ENCODE measurements at regions of chr12 and their contacts with region 1.

Region 1: GRCh38 chr12:51341259-51342007 is 5.0 kb downstream of the CELA1 start:
- DNase-seq: peak; percentile 85
- ATAC-seq: peak; percentile 86
- H3K4me3 ChIP-seq: no peak overlapping the region
- H3K4me3 Mint-ChIP-seq: peak overlapping the region; percentile 42
- H3K27ac ChIP-seq: no peak overlapping the region
- H3K27ac Mint-ChIP-seq: peak overlapping the region; percentile 43
- H3K4me1 ChIP-seq: peaks cover 42 to 45% of the 10 kb centered on the region in 2 donors
- H3K4me1 Mint-ChIP-seq: peaks cover 43% of the 10 kb centered on the region
- H3K27me3 ChIP-seq: no peaks in the 10 kb centered on the region
- H3K27me3 Mint-ChIP-seq: no peaks in the 10 kb centered on the region
- CTCF ChIP-seq: peak; percentile 99

Region 2: GRCh38 chr12:50986966-50987737 is 354.3 kb before region 1 on chr12:
- CTCF ChIA-PET with region 1: interaction called, 13 read pairs
- POLR2A ChIA-PET with region 1: no interaction called
- intact Hi-C with region 1: loop called (anchors 5 kb)
- DNase-seq: peak; percentile 65
- ATAC-seq: peak; percentile 80
- H3K4me3 ChIP-seq: no peak overlapping the region
- H3K4me3 Mint-ChIP-seq: no peak overlapping the region
- H3K27ac ChIP-seq: no peak overlapping the region
- H3K27ac Mint-ChIP-seq: no peak overlapping the region
- H3K4me1 ChIP-seq: peaks cover 0 to 2% of the 10 kb centered on the region in 2 donors
- H3K4me1 Mint-ChIP-seq: peaks cover 6% of the 10 kb centered on the region
- H3K27me3 ChIP-seq: no peaks in the 10 kb centered on the region
- H3K27me3 Mint-ChIP-seq: no peaks in the 10 kb centered on the region
- CTCF ChIP-seq: peak; percentile 40

Region 3: GRCh38 chr12:51238510-51239334 is 102.7 kb before region 1 on chr12 and contains the start of gene DAZAP2:
- CTCF ChIA-PET with region 1: interaction called, 16 read pairs
- POLR2A ChIA-PET with region 1: interaction called, 4 read pairs
- intact Hi-C with region 1: no loop called
- DNase-seq: peak; percentile 98
- ATAC-seq: peak; percentile 92
- H3K4me3 ChIP-seq: peak within 1 kb of the TSS; percentile 69 to 100 (median 100)
- H3K4me3 Mint-ChIP-seq: peak within 1 kb of the TSS; percentile 93
- H3K27ac ChIP-seq: peak within 1 kb of the TSS; percentile 100
- H3K27ac Mint-ChIP-seq: peak within 1 kb of the TSS; percentile 100
- H3K4me1 ChIP-seq: peaks cover 24 to 34% of the 10 kb centered on the region in 2 donors
- H3K4me1 Mint-ChIP-seq: peaks cover 40% of the 10 kb centered on the region
- H3K27me3 ChIP-seq: no peaks in the 10 kb centered on the region
- H3K27me3 Mint-ChIP-seq: no peaks in the 10 kb centered on the region
- CTCF ChIP-seq: peak; percentile 31
- total RNA-seq, gene DAZAP2: 219 and 233 TPM in 2 replicates

Region 4: DNA sequence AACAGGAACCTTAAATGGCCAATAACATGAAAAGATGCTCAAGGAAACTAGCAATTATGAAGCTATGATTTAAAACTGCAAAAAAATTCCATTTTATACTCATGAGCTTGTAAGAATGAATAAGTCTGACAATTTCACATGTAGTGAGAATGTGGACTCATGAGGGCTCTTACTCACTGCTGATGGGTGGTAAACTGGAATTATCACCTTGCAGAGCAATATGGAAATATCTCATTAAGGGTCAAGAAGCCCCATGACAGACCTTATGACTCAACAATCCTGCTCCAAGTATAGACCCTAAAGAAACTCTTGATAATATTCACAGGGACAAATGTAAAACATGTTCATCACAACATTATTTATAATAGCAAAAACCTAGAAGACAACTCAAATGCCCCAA is 47.7 kb before region 1 on chr12:
- CTCF ChIA-PET with region 1: interaction called, 30 read pairs
- POLR2A ChIA-PET with region 1: no interaction called
- intact Hi-C with region 1: loop called (anchors 1 kb)
- DNase-seq: no peak
- ATAC-seq: no peak
- H3K4me3 ChIP-seq: no peak overlapping the region
- H3K4me3 Mint-ChIP-seq: no peak overlapping the region
- H3K27ac ChIP-seq: no peak overlapping the region
- H3K27ac Mint-ChIP-seq: no peak overlapping the region
- H3K4me1 ChIP-seq: peaks cover 0 to 8% of the 10 kb centered on the region in 2 donors
- H3K4me1 Mint-ChIP-seq: peaks cover 11% of the 10 kb centered on the region
- H3K27me3 ChIP-seq: no peaks in the 10 kb centered on the region
- H3K27me3 Mint-ChIP-seq: no peaks in the 10 kb centered on the region
- CTCF ChIP-seq: no peak

Region 5: DNA sequence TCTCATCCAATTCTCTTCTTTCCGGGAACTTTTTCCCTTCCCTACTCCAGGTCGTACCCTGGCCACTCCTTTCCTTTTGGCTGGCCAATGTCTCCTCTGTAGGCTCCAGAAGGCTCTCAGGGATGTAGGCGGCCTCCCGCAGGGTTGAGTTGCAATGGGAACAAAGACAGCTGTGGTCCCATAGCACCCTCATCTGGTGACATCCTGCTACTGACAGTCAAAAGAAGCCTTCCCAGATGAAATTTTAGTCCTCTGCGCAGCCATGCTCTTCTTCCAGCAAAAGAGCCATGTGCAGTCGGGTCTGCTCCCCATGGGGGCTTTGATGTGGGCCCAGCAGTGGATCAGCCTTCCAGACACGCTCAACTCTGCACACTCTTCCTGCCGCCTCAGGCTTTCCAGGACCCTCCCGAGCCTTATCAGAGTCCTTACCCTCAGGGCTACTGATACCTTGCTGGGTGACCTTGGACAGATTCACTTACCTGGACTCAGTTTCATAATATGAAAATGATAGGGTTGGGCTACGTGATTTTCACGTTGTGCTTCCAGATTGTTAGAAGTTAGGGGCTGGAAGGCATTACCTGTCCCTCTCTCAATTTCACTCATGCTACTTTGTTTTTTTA is 10.6 kb after region 1 on chr12:
- CTCF ChIA-PET with region 1: interaction called, 42 read pairs
- POLR2A ChIA-PET with region 1: no interaction called
- intact Hi-C with region 1: no loop called
- DNase-seq: peak; percentile 64
- ATAC-seq: peak; percentile 45
- H3K4me3 ChIP-seq: no peak overlapping the region
- H3K4me3 Mint-ChIP-seq: no peak overlapping the region
- H3K27ac ChIP-seq: no peak overlapping the region
- H3K27ac Mint-ChIP-seq: no peak overlapping the region
- H3K4me1 ChIP-seq: peaks cover 7 to 9% of the 10 kb centered on the region in 2 donors
- H3K4me1 Mint-ChIP-seq: peaks cover 5% of the 10 kb centered on the region
- H3K27me3 ChIP-seq: no peaks in the 10 kb centered on the region
- H3K27me3 Mint-ChIP-seq: no peaks in the 10 kb centered on the region
- CTCF ChIP-seq: peak; percentile 73

Region 6: GRCh38 chr12:51531978-51532497 is 190.6 kb after region 1 on chr12:
- CTCF ChIA-PET with region 1: interaction called, 21 read pairs
- POLR2A ChIA-PET with region 1: no interaction called
- intact Hi-C with region 1: no loop called
- DNase-seq: peak; percentile 84
- ATAC-seq: peak; percentile 98
- H3K4me3 ChIP-seq: no peak overlapping the region
- H3K4me3 Mint-ChIP-seq: no peak overlapping the region
- H3K27ac ChIP-seq: no peak overlapping the region
- H3K27ac Mint-ChIP-seq: no peak overlapping the region
- H3K4me1 ChIP-seq: peaks cover 7 to 8% of the 10 kb centered on the region in 2 donors
- H3K4me1 Mint-ChIP-seq: peaks cover 9% of the 10 kb centered on the region
- H3K27me3 ChIP-seq: peaks cover 0 to 13% (median 0%) of the 10 kb centered on the region in 4 experiments
- H3K27me3 Mint-ChIP-seq: peaks cover 30% of the 10 kb centered on the region
- CTCF ChIP-seq: peak; percentile 92

Region 7: GRCh38 chr12:51687614-51688013 is 346.2 kb after region 1 on chr12:
- CTCF ChIA-PET with region 1: no interaction called
- POLR2A ChIA-PET with region 1: no interaction called
- intact Hi-C with region 1: no loop called
- DNase-seq: no peak
- ATAC-seq: no peak
- H3K4me3 ChIP-seq: no peak overlapping the region
- H3K4me3 Mint-ChIP-seq: no peak overlapping the region
- H3K27ac ChIP-seq: no peak overlapping the region
- H3K27ac Mint-ChIP-seq: no peak overlapping the region
- H3K4me1 ChIP-seq: no peaks in the 10 kb centered on the region
- H3K4me1 Mint-ChIP-seq: no peaks in the 10 kb centered on the region
- H3K27me3 ChIP-seq: no peaks in the 10 kb centered on the region
- H3K27me3 Mint-ChIP-seq: peaks cover 10% of the 10 kb centered on the region
- CTCF ChIP-seq: no peak